Activated T-helper 1 cell treated with anti-CD3 and anti-CD28 coated beads, Interleukin-12 subunit alpha, Interleukin-12 subunit beta, Interleukin-2, Interleukin-4 antibody, amounts not matched to agents 30 ng/mL and 10 ng/mL and 1 ng/mL, durations not matched to agents 14 hours and 24 hours and 36 hours (primary cell): ENCODE measurements at regions of chr3 and their contacts with region 1.

Region 1: GRCh38 chr3:183468424-183468823 is 40.0 kb upstream of the MCF2L2 start:
- DNase-seq: no peak
- H3K4me3 Mint-ChIP-seq: peak overlapping the region; percentile 12
- H3K27ac Mint-ChIP-seq: peak overlapping the region; percentile 75
- H3K4me1 Mint-ChIP-seq: peaks cover 16% of the 10 kb centered on the region
- H3K27me3 Mint-ChIP-seq: peaks cover 2% of the 10 kb centered on the region

Region 2: GRCh38 chr3:183148056-183148455 is 320.4 kb before region 1 on chr3:
- intact Hi-C with region 1: no loop called
- DNase-seq: no peak
- H3K4me3 Mint-ChIP-seq: no peak overlapping the region
- H3K27ac Mint-ChIP-seq: no peak overlapping the region
- H3K4me1 Mint-ChIP-seq: no peaks in the 10 kb centered on the region
- H3K27me3 Mint-ChIP-seq: no peaks in the 10 kb centered on the region

Region 3: DNA sequence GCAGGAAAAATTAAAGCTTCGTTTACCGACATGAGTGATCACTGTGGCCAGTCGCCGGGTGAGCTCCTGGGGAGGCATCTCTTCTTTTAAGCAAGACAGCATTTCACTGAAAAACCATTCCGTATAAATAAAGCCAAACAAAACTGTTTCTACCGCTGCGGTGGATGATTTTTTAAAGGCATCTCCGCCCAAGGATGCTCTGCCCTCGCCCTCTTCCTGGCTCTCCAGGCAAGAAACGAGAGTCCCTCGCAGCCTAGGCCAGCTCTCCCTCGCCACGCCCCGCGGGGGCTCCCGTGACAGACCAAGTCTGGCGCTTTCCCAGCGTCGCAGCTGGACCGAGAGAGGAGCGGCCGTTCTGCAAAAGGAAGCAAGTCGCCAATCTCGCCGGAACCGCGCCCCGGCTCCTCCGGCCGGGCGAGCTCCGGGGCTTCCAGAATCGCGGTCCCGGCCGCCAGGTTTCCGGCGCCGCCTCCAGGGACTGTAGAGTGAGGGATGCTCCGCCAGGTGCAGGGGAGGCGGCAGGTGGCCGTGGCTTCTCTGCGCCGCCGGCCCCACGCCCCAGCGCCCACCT is 40.5 kb before region 1 on chr3:
- intact Hi-C with region 1: loop called (anchors 1 kb)
- DNase-seq: peak; percentile 14
- H3K4me3 Mint-ChIP-seq: peak overlapping the region; percentile 82
- H3K27ac Mint-ChIP-seq: peak overlapping the region; percentile 42
- H3K4me1 Mint-ChIP-seq: peaks cover 33% of the 10 kb centered on the region
- H3K27me3 Mint-ChIP-seq: peaks cover 9% of the 10 kb centered on the region

Region 4: GRCh38 chr3:183447206-183448001 is 21.0 kb before region 1 on chr3:
- intact Hi-C with region 1: loop called (anchors 1 kb)
- DNase-seq: peak; percentile 75
- H3K4me3 Mint-ChIP-seq: peak overlapping the region; percentile 94
- H3K27ac Mint-ChIP-seq: peak overlapping the region; percentile 86
- H3K4me1 Mint-ChIP-seq: peaks cover 22% of the 10 kb centered on the region
- H3K27me3 Mint-ChIP-seq: peaks cover 8% of the 10 kb centered on the region

Region 5: DNA sequence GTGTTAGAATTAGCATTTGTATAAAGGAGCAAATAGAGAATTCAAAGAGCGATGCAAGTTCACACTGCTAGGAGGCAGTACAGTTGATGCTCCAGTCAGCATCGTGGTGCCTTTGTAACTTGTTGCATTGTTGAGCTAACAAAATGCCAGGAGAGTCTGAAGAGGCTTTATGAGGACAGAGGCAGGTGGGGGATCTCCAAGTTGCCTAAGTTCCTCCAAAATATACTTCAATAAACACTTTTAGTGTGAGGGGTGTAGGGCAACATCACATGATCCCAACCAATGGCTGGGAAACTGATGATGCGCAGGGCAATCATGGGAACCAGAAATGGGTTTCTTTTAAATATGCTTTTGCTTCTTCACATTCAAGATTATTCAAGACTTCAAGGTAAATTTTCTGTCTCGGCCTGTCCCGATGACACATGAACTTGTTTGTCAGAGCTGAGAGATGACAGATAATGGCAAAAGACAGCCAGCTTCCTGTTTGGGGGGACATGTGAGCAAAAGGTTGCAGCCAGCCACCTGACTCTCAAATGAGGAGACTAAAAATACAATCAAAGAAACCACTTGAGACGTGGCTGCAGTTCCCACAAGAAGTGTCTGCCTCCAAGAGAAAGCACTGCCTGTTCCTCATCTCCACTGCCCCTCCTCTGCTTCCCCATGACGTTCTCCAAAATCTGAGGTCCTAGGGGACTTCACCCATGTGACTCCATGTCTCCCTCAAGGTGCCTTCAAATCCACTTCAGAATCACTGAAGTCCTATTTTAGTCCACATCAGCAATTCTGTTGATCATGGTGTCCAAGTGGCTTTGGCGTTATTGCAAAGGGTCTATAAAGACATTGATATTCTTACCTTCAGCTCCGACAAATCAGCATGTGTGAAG is 47.8 kb after region 1 on chr3:
- intact Hi-C with region 1: loop called (anchors 2 kb)
- DNase-seq: peak; percentile 58
- H3K4me3 Mint-ChIP-seq: peak overlapping the region; percentile 34
- H3K27ac Mint-ChIP-seq: peak overlapping the region; percentile 82
- H3K4me1 Mint-ChIP-seq: peaks cover 77% of the 10 kb centered on the region
- H3K27me3 Mint-ChIP-seq: no peaks in the 10 kb centered on the region

Region 6: DNA sequence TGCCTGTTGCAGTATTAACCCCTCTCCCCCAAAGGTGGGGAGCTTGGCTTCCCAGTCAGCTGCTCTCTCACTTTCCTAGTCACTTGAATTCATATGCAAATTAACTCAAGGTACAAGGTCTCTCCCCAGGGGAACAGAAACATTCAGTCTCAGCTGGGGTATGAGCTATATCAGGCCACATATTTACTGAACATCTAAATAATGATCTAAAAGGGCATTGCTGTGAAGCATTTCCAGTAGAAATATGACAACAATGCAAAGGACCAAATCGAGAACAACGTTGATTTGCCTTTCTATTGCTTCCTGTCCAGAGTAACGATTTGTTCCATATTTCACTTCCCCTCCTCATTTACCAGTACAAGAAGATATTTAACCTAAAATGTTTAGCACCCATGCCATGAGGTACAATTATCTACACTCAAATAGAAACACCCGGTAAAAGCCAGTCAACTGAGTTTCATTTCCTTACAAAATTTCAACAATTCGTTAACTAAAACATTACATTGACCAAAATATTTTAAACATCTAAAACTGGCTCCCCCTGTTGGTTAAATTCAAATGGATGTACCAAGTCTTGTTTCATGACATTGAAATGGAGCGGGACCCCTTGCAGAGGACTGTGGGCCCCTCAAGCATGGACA is 123.6 kb after region 1 on chr3:
- intact Hi-C with region 1: loop called (anchors 1 kb)
- DNase-seq: no peak
- H3K4me3 Mint-ChIP-seq: no peak overlapping the region
- H3K27ac Mint-ChIP-seq: peak overlapping the region; percentile 30
- H3K4me1 Mint-ChIP-seq: peaks cover 39% of the 10 kb centered on the region
- H3K27me3 Mint-ChIP-seq: no peaks in the 10 kb centered on the region

Region 7: GRCh38 chr3:183697610-183698317 is 229.3 kb after region 1 on chr3 and contains the start of gene YEATS2:
- intact Hi-C with region 1: loop called (anchors 1 kb)
- DNase-seq: peak; percentile 65
- H3K4me3 Mint-ChIP-seq: peak within 1 kb of the TSS; percentile 88
- H3K27ac Mint-ChIP-seq: peak within 1 kb of the TSS; percentile 94
- H3K4me1 Mint-ChIP-seq: peaks cover 37% of the 10 kb centered on the region
- H3K27me3 Mint-ChIP-seq: no peaks in the 10 kb centered on the region
- total RNA-seq, gene YEATS2: 54.2 and 57.4 TPM in 2 replicates

Region 8: DNA sequence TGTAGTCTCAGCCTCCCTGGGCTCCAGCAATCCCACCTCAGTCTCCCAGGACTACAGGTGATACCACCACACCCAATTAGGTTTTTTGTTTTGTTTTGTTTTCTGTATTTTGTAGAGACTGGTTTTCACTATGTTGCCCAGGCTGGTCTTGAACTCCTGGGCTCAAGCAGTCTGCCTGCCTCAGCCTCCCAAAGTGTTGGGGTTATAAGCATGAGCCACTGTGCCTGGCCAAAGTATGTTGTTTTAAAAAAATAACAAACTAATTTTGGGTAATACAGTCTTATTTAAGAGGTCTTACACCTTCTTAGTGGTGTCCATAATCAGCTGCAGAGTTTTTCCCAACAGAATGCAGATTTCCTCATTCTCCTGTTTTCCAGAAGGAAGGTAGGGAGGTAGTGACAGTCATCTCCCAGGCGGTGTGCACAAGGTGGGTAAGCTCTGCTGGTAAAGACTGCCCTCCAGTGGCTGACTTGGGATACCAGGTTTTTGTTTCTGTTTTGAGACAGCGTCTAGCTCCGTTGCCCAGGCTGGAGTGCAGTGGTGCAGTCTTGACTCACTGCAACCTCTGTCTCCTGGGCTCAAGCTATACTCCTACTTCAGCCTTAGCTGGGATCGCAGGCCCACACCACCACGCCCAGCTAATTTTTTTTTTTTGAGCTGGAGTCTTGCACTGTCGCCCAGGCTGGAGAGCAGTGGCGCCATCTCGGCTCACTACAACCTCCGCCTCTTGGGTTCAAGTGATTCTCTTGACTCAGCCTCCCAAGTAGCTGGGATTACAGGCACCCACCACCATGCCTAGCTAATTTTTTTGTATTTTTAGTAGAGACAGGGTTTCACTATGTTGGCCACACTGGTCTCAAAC is 298.6 kb after region 1 on chr3:
- intact Hi-C with region 1: loop called (anchors 1 kb)
- DNase-seq: peak; percentile 63
- H3K4me3 Mint-ChIP-seq: no peak overlapping the region
- H3K27ac Mint-ChIP-seq: no peak overlapping the region
- H3K4me1 Mint-ChIP-seq: peaks cover 7% of the 10 kb centered on the region
- H3K27me3 Mint-ChIP-seq: no peaks in the 10 kb centered on the region